ENCODE measurements at regions of chr5 and their contacts with region 1.

Region 1: DNA sequence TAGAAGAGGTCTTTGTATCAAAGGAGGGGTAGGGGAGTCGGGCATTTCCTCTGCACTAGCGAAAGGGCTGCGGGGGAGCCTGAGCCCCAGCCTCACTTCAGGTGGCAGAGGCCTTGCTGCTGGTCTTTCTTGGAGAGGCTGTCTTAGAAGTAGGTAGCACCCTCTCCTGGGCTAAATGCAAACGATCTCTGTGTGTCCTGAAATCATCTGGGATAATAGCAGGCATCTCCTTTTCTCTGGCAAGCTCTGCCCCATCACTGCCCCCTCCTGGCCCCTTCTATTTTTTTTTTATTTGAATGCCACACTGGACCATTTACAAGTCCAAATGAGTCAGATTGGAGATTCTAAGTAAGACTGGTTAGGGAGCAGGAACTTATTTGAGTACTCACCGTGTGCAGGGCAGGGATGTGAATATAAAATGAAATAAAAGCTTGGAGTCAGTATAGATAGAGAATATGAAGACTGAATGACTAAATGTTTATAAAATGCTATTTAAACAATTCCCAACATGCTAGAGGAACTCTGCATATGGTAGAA is 137.1 kb downstream of the FGF1 start:
- DNase-seq: peak; percentile 82
- H3K4me3 ChIP-seq: no peak overlapping the region
- H3K27ac ChIP-seq: no peak overlapping the region
- H3K4me1 ChIP-seq: no peaks in the 10 kb centered on the region
- H3K27me3 ChIP-seq: no peaks in the 10 kb centered on the region
- CTCF ChIP-seq: peak; percentile 37 to 74 (median 74)
- POLR2A ChIP-seq: no peak

Region 2: DNA sequence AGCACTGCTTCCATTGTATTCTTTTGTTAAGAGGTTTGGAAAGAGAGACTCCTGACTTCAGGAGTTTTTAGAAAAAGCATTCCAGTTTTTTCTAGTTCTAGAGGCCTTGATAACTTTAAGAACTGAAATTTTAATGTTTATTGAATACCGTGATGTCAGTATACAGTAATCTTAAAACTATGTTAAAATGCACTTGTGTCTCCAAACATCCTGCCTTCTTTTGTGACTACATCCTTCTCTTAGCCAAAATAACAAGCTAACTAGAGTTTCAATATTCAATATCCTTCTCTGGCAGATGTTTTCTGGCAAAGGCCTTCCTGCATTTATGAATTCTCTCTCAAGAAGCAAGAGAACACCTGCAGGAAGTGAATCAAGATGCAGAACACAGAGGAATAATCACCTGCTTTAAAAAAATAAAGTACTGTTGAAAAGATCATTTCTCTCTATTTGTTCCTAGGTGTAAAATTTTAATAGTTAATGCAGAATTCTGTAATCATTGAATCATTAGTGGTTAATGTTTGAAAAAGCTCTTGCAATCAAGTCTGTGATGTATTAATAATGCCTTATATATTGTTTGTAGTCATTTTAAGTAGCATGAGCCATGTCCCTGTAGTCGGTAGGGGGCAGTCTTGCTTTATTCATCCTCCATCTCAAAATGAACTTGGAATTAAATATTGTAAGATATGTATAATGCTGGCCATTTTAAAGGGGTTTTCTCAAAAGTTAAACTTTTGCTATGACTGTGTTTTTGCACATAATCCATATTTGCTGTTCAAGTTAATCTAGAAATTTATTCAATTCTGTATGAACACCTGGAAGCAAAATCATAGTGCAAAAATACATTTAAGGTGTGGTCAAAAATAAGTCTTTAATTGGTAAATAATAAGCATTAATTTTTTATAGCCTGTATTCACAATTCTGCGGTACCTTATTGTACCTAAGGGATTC is 397.1 kb before region 1 on chr5:
- intact Hi-C with region 1: loop called (anchors 10 kb)
- DNase-seq: peak; percentile 66
- H3K4me3 ChIP-seq: no peak overlapping the region
- H3K27ac ChIP-seq: no peak overlapping the region
- H3K4me1 ChIP-seq: no peaks in the 10 kb centered on the region
- H3K27me3 ChIP-seq: no peaks in the 10 kb centered on the region
- CTCF ChIP-seq: peak; percentile 71 to 84 (median 72)
- POLR2A ChIP-seq: no peak

Region 3: DNA sequence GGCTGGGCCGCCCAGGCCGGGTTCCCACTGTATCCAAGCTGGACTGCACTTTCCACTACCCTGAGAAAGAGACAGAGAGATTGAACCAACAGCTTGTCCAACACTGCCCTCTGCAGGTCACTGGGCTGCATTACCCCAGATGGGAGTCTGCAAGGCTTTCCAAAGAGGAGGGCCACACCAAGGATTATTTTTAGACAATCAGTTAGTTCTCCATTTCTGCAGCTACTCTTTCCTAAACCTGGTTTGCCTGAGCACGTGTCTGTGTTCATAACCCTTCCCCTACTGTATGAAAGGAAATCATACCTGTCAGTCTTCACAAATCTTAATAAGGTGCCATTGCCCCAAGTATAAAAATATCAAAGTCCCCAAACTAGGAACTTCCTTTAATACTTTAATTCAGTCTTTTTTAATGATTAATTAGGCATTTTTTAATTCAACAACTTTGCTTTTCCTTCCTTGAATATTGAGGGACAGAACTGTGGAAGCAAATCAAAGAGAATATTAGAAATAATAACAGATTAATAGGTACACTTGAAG is 150.4 kb after region 1 on chr5:
- intact Hi-C with region 1: no loop called
- DNase-seq: peak; percentile 92
- H3K4me3 ChIP-seq: no peak overlapping the region
- H3K27ac ChIP-seq: no peak overlapping the region
- H3K4me1 ChIP-seq: peaks cover 17% of the 10 kb centered on the region
- H3K27me3 ChIP-seq: no peaks in the 10 kb centered on the region
- CTCF ChIP-seq: peak; percentile 92 to 97 (median 94)
- POLR2A ChIP-seq: no peak

Region 4: DNA sequence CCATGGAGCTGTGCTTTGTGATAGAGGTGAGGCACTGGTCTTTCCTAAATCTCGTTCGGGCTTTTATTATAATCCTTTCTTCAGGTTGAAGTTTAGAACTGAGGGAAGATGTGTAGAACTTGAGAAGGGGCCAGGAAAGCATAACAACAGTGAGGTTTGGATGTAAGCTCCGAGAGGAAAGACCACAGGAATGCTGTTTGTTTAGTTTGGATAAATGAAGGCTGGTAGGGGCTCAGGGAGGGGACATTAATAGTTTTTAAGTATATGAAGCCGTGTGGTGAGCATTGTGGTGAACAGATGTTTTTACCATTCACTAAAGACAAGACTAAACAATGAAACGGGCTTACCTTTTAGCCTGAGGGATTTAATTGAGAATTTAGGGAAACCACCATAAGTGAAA is 352.1 kb after region 1 on chr5:
- intact Hi-C with region 1: no loop called
- DNase-seq: no peak
- H3K4me3 ChIP-seq: no peak overlapping the region
- H3K27ac ChIP-seq: no peak overlapping the region
- H3K4me1 ChIP-seq: peaks cover 4% of the 10 kb centered on the region
- H3K27me3 ChIP-seq: no peaks in the 10 kb centered on the region
- CTCF ChIP-seq: no peak
- POLR2A ChIP-seq: no peak